Ascending aorta (tissue), 2 donors: ENCODE measurements at regions of chr3 and their contacts with region 1.

Region 1: DNA sequence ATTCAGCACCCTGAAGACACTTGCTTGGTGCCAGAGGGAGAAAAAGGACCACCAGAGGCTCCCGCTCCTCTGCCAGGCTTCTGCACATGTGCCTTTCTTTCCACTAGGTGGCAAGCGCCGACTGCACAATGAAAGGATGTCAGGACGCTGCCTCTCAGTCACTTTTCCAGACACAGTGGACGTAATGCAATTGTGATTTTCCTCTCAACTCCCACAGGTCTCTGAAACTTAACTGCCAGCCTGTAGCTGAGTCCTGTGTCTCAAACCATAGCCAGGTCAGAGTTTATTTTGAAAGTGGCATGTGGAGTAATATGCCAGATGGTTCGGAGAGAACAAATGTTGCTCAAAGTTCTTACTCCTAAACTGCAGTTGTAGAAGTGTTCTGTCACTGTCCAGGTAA is 162.9 kb downstream of the ITPR1 start:
- DNase-seq: peak; percentile 25 to 75
- H3K4me3 ChIP-seq: no peak overlapping the region
- H3K27ac ChIP-seq: peak overlapping the region; percentile 63 to 68
- H3K4me1 ChIP-seq: peaks cover 0 to 11% of the 10 kb centered on the region in 2 donors
- H3K27me3 ChIP-seq: no peaks in the 10 kb centered on the region
- CTCF ChIP-seq: peak; percentile 73 to 81 (median 76)

Region 2: DNA sequence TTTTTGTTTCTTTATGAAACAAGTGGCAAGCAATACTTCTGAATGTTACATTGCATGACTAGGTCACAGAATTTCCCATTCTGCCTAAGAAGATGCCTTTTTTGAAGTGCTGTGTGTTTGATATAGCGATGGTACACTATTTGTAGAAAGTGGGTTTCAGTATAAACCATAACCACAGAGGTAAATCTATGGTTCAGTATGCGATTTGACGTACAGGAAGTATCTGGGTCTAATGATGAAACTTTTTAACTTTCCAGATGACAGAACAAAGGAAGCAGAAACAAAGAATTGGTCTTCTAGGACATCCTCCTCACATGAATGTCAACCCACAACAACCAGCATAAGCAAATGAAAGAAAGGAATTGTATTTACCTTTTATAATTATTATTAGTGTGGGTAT is 189.8 kb after region 1 on chr3:
- intact Hi-C with region 1: no loop called
- DNase-seq: no peak
- H3K4me3 ChIP-seq: no peak overlapping the region
- H3K27ac ChIP-seq: no peak overlapping the region
- H3K4me1 ChIP-seq: no peaks in the 10 kb centered on the region
- H3K27me3 ChIP-seq: no peaks in the 10 kb centered on the region
- CTCF ChIP-seq: no peak

Region 3: GRCh38 chr3:5057857-5058324 is 401.8 kb after region 1 on chr3:
- intact Hi-C with region 1: loop called (anchors 5 kb)
- DNase-seq: peak; percentile 49 to 89
- H3K4me3 ChIP-seq: no peak overlapping the region
- H3K27ac ChIP-seq: no peak overlapping the region
- H3K4me1 ChIP-seq: peaks cover 0 to 7% of the 10 kb centered on the region in 2 donors
- H3K27me3 ChIP-seq: no peaks in the 10 kb centered on the region
- CTCF ChIP-seq: peak; percentile 70 to 79 (median 77)

Region 4: GRCh38 chr3:5401002-5401401 is 744.9 kb after region 1 on chr3:
- intact Hi-C with region 1: no loop called
- DNase-seq: no peak
- H3K4me3 ChIP-seq: no peak overlapping the region
- H3K27ac ChIP-seq: no peak overlapping the region
- H3K4me1 ChIP-seq: no peaks in the 10 kb centered on the region
- H3K27me3 ChIP-seq: no peaks in the 10 kb centered on the region
- CTCF ChIP-seq: no peak